ENCODE measurements at regions of chr17 and their contacts with region 1.

Region 1: DNA sequence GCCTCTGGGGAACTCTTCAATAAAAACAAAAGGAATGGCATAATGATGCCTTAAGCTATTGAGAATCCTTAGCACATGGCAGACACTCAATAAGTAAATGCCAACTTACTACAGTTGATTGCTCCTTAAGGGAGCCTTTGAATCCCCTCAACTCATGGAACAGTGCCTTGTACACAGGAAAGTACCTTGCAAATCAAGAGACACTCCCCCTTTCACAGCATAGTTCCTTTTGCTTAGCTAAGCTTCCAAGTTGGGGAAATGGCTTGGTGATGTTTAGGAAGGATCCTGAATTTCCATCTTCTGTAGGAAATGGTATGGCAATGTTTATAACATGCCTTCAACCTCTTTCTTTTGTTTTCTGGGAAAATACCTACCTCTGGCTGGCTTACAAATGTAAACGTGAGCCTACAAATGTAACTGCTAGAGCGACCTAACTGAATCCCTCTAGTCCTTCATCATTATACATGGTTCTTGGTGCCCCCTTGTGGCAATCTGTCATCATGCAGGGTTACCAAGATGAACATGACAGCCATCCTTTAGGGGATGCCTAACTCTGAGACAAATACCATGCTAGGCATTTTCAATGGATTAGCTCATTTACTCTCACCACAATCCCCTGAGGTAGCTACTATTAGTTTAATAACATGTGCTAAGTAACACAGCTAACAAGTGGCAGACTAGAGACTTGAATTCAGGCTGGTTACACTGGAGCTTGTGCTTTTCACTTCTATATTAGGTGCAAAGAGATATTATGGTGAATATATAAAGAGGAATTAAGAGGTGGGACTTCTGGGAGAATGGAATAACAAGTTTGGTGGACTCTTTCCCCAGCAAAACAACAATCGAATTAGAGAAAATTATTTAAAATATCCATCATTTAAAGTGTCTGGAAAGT is 65.0 kb downstream of the MMD start:
- DNase-seq: peak; percentile 51 to 56
- H3K4me3 ChIP-seq: no peak overlapping the region
- H3K27ac ChIP-seq: no peak overlapping the region
- H3K4me1 ChIP-seq: no peaks in the 10 kb centered on the region
- H3K27me3 ChIP-seq: no peaks in the 10 kb centered on the region
- CTCF ChIP-seq: peak; percentile 92

Region 2: GRCh38 chr17:55219934-55220333 is 136.7 kb before region 1 on chr17:
- CTCF ChIA-PET with region 1: no interaction called
- POLR2A ChIA-PET with region 1: no interaction called
- intact Hi-C with region 1: no loop called
- DNase-seq: no peak
- H3K4me3 ChIP-seq: no peak overlapping the region
- H3K27ac ChIP-seq: no peak overlapping the region
- H3K4me1 ChIP-seq: no peaks in the 10 kb centered on the region
- H3K27me3 ChIP-seq: peaks cover 68% of the 10 kb centered on the region
- CTCF ChIP-seq: no peak

Region 3: GRCh38 chr17:55513885-55514591 is 157.4 kb after region 1 on chr17:
- CTCF ChIA-PET with region 1: interaction called, 6 read pairs
- POLR2A ChIA-PET with region 1: no interaction called
- intact Hi-C with region 1: loop called (anchors 1 kb)
- DNase-seq: peak; percentile 64 to 68
- H3K4me3 ChIP-seq: no peak overlapping the region
- H3K27ac ChIP-seq: no peak overlapping the region
- H3K4me1 ChIP-seq: no peaks in the 10 kb centered on the region
- H3K27me3 ChIP-seq: 0 out of 2 replicates have a peak, but pooled peaks cover 3% of the 10 kb centered on the region
- CTCF ChIP-seq: peak; percentile 97

Measured in PC-9 (cell line).